ENCODE measurements at regions of chr10 and their contacts with region 1.

Region 1: GRCh38 chr10:15879663-15880062 is 19.4 kb upstream of the MINDY3 start:
- DNase-seq: no peak
- ATAC-seq: no peak
- H3K4me3 ChIP-seq: no peak overlapping the region
- H3K27ac ChIP-seq: no peak overlapping the region
- H3K4me1 ChIP-seq: no peaks in the 10 kb centered on the region
- H3K27me3 ChIP-seq: peaks cover 0 to 18% (median 0%) of the 10 kb centered on the region in 3 donors
- CTCF ChIP-seq: no peak

Region 2: DNA sequence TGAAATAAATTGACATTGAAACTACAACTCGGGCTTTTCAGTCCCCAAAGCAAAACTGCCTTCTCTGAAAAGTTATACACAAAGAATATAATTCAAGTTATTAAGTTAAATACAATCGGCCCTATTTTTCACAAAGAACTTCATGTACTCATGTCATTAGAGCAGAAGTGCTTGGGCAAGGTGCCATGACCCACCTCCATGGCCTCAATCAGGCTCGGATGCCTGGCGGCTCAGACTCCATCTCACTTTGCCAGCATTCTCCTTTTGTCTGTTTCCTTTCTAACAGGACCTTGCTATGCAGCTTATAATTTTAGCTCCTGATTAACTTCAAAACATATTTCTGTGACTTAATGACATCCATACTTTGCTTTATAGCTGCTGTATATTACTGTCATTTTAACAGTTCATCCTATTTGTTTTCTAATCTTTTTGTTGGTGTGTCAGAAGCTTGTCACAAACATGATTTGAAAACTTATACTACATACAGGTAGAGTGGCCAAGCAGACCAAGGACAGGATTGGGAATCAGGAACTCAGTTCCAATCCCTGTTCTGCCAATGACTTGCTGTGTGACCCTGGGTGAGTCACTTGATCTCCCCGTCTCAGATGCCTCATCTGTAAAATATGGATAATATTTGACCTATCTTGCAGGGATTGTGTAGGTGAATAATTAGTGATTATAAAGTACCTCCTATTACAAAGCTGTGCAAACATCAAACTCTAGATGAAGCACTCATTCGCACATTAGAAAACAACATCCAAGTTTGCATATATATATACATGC is 99.1 kb before region 1 on chr10:
- intact Hi-C with region 1: no loop called
- DNase-seq: peak; percentile 21 to 59
- ATAC-seq: peak in 2 of 4 donors; percentile 41 to 66
- H3K4me3 ChIP-seq: no peak overlapping the region
- H3K27ac ChIP-seq: peak overlapping the region; percentile 19
- H3K4me1 ChIP-seq: peaks cover 5% of the 10 kb centered on the region
- H3K27me3 ChIP-seq: no peaks in the 10 kb centered on the region
- CTCF ChIP-seq: no peak

Region 3: GRCh38 chr10:16030562-16030961 is 150.9 kb after region 1 on chr10:
- intact Hi-C with region 1: no loop called
- DNase-seq: no peak
- ATAC-seq: no peak
- H3K4me3 ChIP-seq: no peak overlapping the region
- H3K27ac ChIP-seq: no peak overlapping the region
- H3K4me1 ChIP-seq: no peaks in the 10 kb centered on the region
- H3K27me3 ChIP-seq: no peaks in the 10 kb centered on the region
- CTCF ChIP-seq: no peak

Region 4: DNA sequence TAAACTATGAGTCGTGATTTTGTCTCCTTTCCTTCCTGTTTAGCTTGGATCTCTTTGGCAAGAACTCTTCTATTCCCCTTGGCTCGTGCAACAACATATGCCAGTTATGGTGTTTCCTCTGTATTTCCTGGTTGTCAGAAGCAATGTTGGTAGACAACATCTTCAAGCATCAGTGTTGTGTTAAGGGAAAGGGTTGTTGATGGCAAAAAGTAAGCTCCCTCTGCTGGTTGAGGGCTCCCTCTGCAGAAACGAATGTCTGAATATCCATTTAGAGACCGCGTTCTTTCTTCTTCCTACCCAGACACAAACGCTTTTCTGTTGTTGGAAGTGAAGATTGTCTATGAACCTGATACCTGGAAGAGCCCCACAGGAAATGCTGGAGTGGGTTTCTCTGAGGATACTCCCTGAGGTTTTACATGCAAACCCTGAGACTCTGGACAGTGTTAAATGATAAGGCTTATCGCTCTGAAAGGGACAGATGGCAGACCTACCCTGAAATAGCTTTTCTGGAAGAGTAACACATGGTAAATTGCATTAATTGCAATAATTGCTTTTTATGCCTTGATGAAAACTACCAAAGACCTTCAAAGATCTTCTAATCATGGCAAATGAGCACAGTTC is 665.6 kb after region 1 on chr10:
- intact Hi-C with region 1: loop called in 1 of 2 experiments (anchors 10 kb)
- DNase-seq: no peak
- ATAC-seq: no peak
- H3K4me3 ChIP-seq: no peak overlapping the region
- H3K27ac ChIP-seq: no peak overlapping the region
- H3K4me1 ChIP-seq: no peaks in the 10 kb centered on the region
- H3K27me3 ChIP-seq: no peaks in the 10 kb centered on the region
- CTCF ChIP-seq: peak; percentile 47

Measured in psoas muscle (tissue), 8 donors.